Activated CD4-positive, alpha-beta memory T cell treated with anti-CD3 and anti-CD28 coated beads, Interleukin-2, amount 10 ng/mL, durations not matched to agents 7 days and 5 days (primary cell): ENCODE measurements at regions of chr5 and their contacts with region 1.

Region 1: DNA sequence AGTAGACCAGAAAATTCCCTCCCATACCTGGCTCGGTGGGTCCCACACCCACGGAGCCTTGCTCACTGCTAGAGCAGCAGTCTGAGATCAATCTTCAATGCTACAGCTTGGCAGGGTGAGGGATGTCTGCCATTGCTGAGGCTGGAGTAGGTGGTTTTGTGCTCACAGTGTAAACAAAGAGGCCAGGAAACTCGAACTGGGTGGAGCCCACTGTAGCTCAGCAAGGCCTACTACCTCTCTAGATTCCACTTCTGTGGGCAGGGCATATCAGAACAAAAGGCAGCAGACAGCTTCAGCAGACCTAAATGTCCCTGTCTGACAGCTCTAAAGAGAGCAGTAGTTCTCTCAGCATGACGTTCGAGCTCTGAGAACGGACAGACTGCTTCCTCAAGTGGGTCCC is 5.6 kb upstream of the GZMA start:
- DNase-seq: peak; percentile 76
- H3K4me3 Mint-ChIP-seq: peak overlapping the region; percentile 38
- H3K27ac Mint-ChIP-seq: peak overlapping the region; percentile 92
- H3K4me1 Mint-ChIP-seq: peaks cover 84% of the 10 kb centered on the region
- H3K27me3 Mint-ChIP-seq: peaks cover 2% of the 10 kb centered on the region

Region 2: DNA sequence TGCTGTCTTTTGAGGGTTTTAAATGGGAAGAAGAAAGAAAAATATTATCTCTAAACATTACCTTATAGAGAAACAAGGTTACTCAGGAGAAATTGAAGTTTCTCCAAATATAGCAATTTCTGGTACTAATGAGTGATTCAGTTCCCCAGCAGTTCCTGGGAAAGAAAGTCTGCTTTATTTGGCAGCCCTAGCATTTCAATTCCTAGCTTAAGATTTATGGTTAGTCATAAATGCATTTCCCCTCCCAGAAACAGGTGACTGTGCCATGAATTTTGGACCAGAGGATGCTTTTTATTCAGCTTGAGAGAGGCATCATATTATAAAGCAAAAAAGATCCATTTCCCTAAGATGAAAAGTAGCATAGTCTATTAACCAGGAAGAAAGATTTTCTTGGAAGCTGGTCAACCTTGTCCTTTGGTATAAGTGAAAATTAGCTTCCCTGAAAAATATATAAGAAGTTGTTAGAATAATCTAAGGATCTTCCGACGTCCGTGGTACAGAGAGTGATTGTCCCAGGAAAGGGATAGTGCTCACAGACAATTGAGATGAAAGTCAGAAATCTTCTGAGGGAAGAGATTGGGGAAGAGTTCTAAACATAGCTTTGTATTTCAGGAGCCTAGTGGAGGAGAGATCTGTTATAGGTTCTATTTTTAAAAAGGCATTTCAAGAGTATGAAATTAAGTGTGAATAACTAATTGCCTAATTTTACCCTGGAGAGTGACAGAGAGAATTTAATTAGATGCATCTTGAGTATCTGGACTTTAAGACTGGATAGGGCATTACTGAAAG is 276.3 kb before region 1 on chr5:
- CTCF ChIA-PET with region 1: no interaction called
- POLR2A ChIA-PET with region 1: no interaction called
- DNase-seq: no peak
- H3K4me3 Mint-ChIP-seq: no peak overlapping the region
- H3K27ac Mint-ChIP-seq: no peak overlapping the region
- H3K4me1 Mint-ChIP-seq: no peaks in the 10 kb centered on the region
- H3K27me3 Mint-ChIP-seq: peaks cover 35% of the 10 kb centered on the region

Region 3: GRCh38 chr5:55027595-55027994 is 69.3 kb before region 1 on chr5:
- CTCF ChIA-PET with region 1: no interaction called
- POLR2A ChIA-PET with region 1: interaction called, 59 read pairs
- DNase-seq: peak; percentile 64
- H3K4me3 Mint-ChIP-seq: peak overlapping the region; percentile 42
- H3K27ac Mint-ChIP-seq: peak overlapping the region; percentile 91
- H3K4me1 Mint-ChIP-seq: peaks cover 76% of the 10 kb centered on the region
- H3K27me3 Mint-ChIP-seq: no peaks in the 10 kb centered on the region

Region 4: GRCh38 chr5:55072666-55073065 is 24.2 kb before region 1 on chr5:
- CTCF ChIA-PET with region 1: interaction called, 8 read pairs
- POLR2A ChIA-PET with region 1: interaction called, 41 read pairs
- DNase-seq: no peak
- H3K4me3 Mint-ChIP-seq: peak overlapping the region; percentile 6
- H3K27ac Mint-ChIP-seq: peak overlapping the region; percentile 91
- H3K4me1 Mint-ChIP-seq: peaks cover 48% of the 10 kb centered on the region
- H3K27me3 Mint-ChIP-seq: no peaks in the 10 kb centered on the region